ENCODE measurements at regions of chr9 and their contacts with region 1.

Region 1: DNA sequence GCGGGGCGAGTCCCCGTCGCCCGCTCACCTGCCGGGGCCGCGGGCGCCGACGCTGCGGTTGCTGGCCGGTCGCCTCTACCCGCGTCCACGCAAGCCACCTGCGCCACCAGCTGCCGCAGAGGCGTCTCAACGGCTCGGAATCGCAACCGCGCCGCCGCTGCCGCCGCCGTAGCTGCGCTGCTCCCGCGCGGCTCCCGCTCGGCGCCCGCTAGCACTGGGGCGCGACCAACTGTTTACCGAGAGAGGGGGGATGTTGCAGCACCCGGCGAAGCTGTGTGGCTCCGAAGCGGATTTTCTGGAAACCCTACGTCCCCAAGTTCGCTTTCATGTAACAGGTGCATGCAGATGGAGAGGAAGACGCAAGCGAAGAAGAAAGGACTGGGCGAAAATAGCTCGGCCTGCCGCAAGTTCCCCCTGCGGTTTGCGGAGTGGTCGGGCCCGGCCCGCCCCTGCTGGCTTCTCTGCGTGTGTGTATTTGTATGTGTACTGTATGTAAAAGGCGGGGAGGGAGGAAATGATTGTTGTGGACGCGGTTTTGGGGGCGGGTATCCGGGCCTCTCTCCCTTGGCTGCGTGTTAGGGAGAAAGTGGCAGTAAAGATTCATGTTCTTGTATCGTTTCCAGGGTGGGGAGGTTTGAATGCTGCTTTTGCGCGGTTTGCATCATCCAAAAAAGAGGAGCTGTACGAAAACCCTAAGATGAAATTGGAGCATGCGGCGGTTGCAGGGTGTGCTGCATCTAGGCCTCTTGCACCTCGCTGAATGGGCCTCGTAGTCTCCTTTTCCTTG is at the start of gene PSIP1:
- DNase-seq: peak; percentile 95
- ATAC-seq: peak; percentile 79
- H3K4me3 ChIP-seq: peak within 1 kb of the TSS; percentile 60 to 96 (median 94)
- H3K4me3 Mint-ChIP-seq: peak within 1 kb of the TSS; percentile 95
- H3K27ac ChIP-seq: peak within 1 kb of the TSS; percentile 97 to 98
- H3K27ac Mint-ChIP-seq: peak within 1 kb of the TSS; percentile 100
- H3K4me1 ChIP-seq: peaks cover 30 to 40% of the 10 kb centered on the region in 2 donors
- H3K4me1 Mint-ChIP-seq: peaks cover 58% of the 10 kb centered on the region
- H3K27me3 ChIP-seq: no peaks in the 10 kb centered on the region
- H3K27me3 Mint-ChIP-seq: no peaks in the 10 kb centered on the region
- CTCF ChIP-seq: no peak
- total RNA-seq, gene PSIP1: 124 and 134 TPM in 2 replicates

Region 2: DNA sequence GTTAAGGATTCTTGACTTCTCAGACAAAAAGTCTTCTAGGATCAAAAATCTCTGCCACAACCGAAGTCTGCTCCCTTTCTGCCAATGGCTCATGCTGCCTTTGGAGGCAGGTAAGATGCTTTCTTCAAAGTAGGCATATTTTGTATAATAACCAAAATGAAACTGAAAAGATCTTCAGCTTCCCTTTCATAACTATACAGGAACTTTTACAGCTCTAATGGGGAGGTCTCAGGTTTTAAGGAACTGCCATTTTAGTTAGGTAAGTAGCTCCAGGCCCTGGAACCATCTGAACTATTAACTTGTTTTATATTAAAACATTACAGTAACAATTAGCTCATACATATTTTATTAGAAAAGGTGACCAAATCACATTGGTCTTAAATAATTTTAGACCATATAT is 489.8 kb before region 1 on chr9:
- CTCF ChIA-PET with region 1: no interaction called
- POLR2A ChIA-PET with region 1: no interaction called
- intact Hi-C with region 1: no loop called
- DNase-seq: no peak
- ATAC-seq: no peak
- H3K4me3 ChIP-seq: no peak overlapping the region
- H3K4me3 Mint-ChIP-seq: no peak overlapping the region
- H3K27ac ChIP-seq: no peak overlapping the region
- H3K27ac Mint-ChIP-seq: no peak overlapping the region
- H3K4me1 ChIP-seq: no peaks in the 10 kb centered on the region
- H3K4me1 Mint-ChIP-seq: no peaks in the 10 kb centered on the region
- H3K27me3 ChIP-seq: no peaks in the 10 kb centered on the region
- H3K27me3 Mint-ChIP-seq: no peaks in the 10 kb centered on the region
- CTCF ChIP-seq: no peak

Region 3: DNA sequence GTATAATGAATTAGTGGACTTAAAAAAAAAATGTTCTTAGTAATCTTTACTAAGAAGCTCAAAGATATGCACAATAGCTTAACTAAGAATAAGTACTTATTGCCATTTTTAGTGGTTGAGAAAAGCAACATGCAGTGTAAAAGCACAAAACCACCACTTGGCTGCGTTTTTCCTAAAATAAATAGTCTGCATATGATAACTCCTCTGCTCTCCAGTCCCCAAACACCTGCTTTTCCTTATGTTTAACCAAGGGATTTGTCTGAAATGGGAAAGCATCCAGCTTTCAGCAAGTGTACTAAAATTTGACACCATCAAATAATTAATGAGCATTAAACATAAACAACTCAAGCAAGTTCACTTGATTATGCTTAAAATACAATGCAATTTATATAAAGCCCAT is 41.6 kb before region 1 on chr9:
- CTCF ChIA-PET with region 1: interaction called, 3 read pairs
- POLR2A ChIA-PET with region 1: no interaction called
- intact Hi-C with region 1: loop called (anchors 5 kb)
- DNase-seq: no peak
- ATAC-seq: no peak
- H3K4me3 ChIP-seq: no peak overlapping the region
- H3K4me3 Mint-ChIP-seq: no peak overlapping the region
- H3K27ac ChIP-seq: no peak overlapping the region
- H3K27ac Mint-ChIP-seq: no peak overlapping the region
- H3K4me1 ChIP-seq: no peaks in the 10 kb centered on the region
- H3K4me1 Mint-ChIP-seq: no peaks in the 10 kb centered on the region
- H3K27me3 ChIP-seq: no peaks in the 10 kb centered on the region
- H3K27me3 Mint-ChIP-seq: no peaks in the 10 kb centered on the region
- CTCF ChIP-seq: no peak

Region 4: DNA sequence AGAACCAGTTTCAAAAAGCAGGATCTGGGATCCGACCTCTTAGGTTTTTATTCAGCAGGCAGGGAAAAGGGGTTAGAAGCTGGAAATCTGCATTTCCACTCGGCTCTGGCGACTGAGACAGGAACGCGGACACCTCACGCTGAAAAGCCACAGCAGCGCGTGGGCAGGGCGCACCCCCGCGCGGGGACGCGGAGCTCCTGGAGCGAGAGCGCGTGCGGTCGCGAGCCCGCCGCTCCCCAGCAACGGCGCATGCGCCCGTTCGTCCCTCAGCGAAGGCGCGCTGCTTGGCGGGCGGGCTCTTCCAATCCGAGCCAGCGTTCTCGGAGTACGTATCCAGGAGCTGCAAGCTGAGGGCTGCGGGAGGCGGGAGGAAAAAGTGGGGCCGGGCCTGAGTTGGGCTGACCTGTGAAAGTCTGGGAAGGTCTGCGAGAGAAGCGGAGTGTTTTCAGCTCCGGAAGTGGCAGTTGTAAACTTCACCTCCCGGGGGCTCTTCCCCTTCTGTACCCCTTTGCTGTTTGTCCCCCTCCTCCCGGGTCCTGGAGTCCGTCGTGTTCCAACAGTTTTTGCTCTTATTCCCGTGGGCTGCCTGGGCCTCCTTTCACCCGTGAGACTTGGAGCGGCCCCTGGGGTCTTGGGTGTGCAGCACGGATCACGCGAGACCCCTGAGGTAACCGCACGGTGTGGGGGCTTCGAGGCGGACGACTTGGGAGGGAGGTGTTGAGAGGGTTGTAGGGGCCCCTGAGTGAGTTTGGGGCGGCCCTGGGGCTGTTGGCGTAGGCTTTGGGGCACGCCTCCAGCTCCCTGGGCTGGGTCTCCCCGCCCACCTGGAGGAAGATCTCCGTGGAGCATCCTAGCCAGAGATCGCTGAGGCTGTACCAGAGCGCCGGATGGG is 41.9 kb after region 1 on chr9 and contains the start of gene CCDC171:
- CTCF ChIA-PET with region 1: interaction called, 13 read pairs
- POLR2A ChIA-PET with region 1: interaction called, 17 read pairs
- intact Hi-C with region 1: loop called (anchors 1 kb)
- DNase-seq: peak; percentile 91
- ATAC-seq: peak; percentile 81
- H3K4me3 ChIP-seq: peak within 1 kb of the TSS; percentile 75 to 96 (median 83)
- H3K4me3 Mint-ChIP-seq: peak within 1 kb of the TSS; percentile 98
- H3K27ac ChIP-seq: peak within 1 kb of the TSS; percentile 40 to 52
- H3K27ac Mint-ChIP-seq: peak within 1 kb of the TSS; percentile 90
- H3K4me1 ChIP-seq: peaks cover 13 to 18% of the 10 kb centered on the region in 2 donors
- H3K4me1 Mint-ChIP-seq: peaks cover 17% of the 10 kb centered on the region
- H3K27me3 ChIP-seq: peaks cover 0 to 3% (median 0%) of the 10 kb centered on the region in 4 experiments
- H3K27me3 Mint-ChIP-seq: no peaks in the 10 kb centered on the region
- CTCF ChIP-seq: peak; percentile 8
- total RNA-seq, gene CCDC171: 5.1 and 6.3 TPM in 2 replicates

Region 5: DNA sequence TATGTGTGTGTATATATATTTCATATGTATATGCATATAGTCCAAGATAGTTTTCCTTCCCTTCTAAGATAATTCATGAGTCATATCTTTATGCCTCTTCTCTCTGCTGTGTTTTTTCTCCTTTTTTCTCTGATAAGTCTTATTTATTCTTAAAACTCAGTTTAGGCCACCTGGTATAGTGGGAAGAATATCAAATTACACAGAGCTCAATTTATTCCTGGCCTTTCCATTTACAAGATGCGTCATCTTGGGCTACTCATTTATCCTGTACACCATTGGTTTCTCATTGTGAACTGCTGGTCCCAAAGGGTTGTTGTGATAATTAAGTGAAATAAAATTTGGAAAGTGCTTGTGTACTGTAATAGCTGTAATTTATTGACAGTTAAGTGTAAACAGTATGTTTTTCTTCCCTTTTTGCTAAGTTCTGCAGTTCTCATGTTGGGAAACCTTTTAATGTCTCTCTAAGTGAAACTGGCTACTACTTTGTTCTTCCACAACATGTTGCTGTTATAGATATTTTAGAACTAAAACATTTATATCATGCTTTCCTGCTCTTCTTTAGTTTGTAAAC is 61.3 kb after region 1 on chr9:
- CTCF ChIA-PET with region 1: no interaction called
- POLR2A ChIA-PET with region 1: no interaction called
- intact Hi-C with region 1: no loop called
- DNase-seq: no peak
- ATAC-seq: no peak
- H3K4me3 ChIP-seq: no peak overlapping the region
- H3K4me3 Mint-ChIP-seq: no peak overlapping the region
- H3K27ac ChIP-seq: no peak overlapping the region
- H3K27ac Mint-ChIP-seq: no peak overlapping the region
- H3K4me1 ChIP-seq: no peaks in the 10 kb centered on the region
- H3K4me1 Mint-ChIP-seq: no peaks in the 10 kb centered on the region
- H3K27me3 ChIP-seq: no peaks in the 10 kb centered on the region
- H3K27me3 Mint-ChIP-seq: no peaks in the 10 kb centered on the region
- CTCF ChIP-seq: no peak

Measured in B cell (primary cell).